Activated CD4-positive, alpha-beta T cell treated with anti-CD3 and anti-CD28 coated beads for 36 hours (primary cell): ENCODE measurements at regions of chr14 and their contacts with region 1.

Region 1: GRCh38 chr14:52987514-52987913 is 36.7 kb upstream of the FERMT2 start:
- DNase-seq: no peak
- ATAC-seq: no peak
- H3K4me3 Mint-ChIP-seq: no peak overlapping the region
- H3K27ac Mint-ChIP-seq: no peak overlapping the region
- H3K4me1 Mint-ChIP-seq: no peaks in the 10 kb centered on the region
- H3K27me3 Mint-ChIP-seq: peaks cover 5% of the 10 kb centered on the region

Region 2: DNA sequence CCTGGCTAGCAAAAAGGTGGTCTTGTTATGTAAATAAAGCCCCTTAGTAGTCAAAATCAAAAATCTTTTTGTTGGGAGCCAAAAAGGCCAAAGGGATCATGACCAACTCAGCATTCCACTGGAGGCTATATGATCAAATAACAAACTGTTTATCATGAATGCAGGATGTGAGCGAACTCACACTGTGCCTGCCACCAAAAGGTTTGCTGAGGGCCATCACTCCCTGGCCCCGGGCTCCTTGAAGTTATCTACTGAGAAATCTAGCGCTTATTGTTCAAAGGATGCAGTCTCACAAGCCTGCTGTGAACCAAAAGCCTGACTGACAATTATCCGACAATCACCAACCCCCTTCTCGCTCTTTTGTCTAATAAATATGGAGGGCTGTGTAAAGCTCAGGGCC is 272.8 kb after region 1 on chr14:
- CTCF ChIA-PET with region 1: no interaction called
- POLR2A ChIA-PET with region 1: interaction called, 15 read pairs
- intact Hi-C with region 1: no loop called
- DNase-seq: no peak
- ATAC-seq: no peak
- H3K4me3 Mint-ChIP-seq: no peak overlapping the region
- H3K27ac Mint-ChIP-seq: no peak overlapping the region
- H3K4me1 Mint-ChIP-seq: no peaks in the 10 kb centered on the region
- H3K27me3 Mint-ChIP-seq: no peaks in the 10 kb centered on the region